ENCODE measurements at regions of chr12 and their contacts with region 1.

Region 1: GRCh38 chr12:69290545-69291277 is 51.3 kb downstream of the CPSF6 start:
- H3K4me3 Mint-ChIP-seq: no peak overlapping the region
- H3K27ac Mint-ChIP-seq: peak overlapping the region; percentile 13
- H3K4me1 Mint-ChIP-seq: peaks cover 30% of the 10 kb centered on the region
- H3K27me3 Mint-ChIP-seq: peaks cover 17% of the 10 kb centered on the region

Region 2: DNA sequence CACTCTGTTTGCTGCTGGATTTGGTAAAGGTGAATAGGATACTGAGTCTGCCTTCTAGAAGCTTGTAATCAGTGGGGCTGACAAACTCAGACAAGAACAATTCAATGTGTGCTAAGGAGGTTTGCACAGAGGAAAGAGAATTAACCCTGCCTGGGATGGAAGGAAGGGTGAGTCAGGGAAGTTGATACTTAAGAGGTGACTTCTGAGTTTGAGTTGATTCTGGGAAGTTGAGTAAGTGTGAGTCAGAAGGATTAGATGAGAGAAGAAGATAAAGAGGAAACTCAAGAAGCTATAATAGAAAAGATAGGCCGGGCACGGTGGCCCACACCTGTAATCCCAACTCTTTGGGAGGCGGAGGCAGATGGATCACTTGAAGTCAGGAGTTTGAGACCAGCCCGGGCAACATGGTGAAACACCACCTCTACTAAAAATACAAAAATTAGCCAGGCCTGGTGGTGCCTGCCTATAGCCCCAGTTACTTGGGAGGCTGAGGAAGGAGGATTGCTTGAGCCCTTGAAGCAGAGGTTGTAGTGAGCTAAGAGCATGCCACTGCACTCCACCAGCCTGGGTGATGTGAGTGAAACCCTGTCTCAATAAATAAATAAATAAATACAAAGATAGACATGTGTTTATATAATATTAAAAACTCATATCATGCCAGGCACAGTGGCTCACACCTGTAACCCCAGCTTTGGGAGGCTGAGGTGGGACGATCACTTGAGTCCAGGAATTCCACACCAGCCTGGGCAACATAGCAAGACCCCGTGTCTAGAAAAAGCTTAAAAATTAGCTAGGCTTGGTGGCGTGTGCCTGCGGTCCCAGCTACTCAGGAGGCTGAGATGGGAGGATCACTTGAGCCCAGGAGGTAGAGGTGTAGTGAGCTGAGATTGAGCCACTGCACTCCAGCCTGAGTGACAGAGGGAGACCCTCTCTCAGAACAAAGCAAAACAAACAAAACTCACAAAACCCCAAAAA is 230.9 kb before region 1 on chr12:
- intact Hi-C with region 1: no loop called
- H3K4me3 Mint-ChIP-seq: no peak overlapping the region
- H3K27ac Mint-ChIP-seq: no peak overlapping the region
- H3K4me1 Mint-ChIP-seq: peaks cover 51% of the 10 kb centered on the region
- H3K27me3 Mint-ChIP-seq: no peaks in the 10 kb centered on the region

Region 3: DNA sequence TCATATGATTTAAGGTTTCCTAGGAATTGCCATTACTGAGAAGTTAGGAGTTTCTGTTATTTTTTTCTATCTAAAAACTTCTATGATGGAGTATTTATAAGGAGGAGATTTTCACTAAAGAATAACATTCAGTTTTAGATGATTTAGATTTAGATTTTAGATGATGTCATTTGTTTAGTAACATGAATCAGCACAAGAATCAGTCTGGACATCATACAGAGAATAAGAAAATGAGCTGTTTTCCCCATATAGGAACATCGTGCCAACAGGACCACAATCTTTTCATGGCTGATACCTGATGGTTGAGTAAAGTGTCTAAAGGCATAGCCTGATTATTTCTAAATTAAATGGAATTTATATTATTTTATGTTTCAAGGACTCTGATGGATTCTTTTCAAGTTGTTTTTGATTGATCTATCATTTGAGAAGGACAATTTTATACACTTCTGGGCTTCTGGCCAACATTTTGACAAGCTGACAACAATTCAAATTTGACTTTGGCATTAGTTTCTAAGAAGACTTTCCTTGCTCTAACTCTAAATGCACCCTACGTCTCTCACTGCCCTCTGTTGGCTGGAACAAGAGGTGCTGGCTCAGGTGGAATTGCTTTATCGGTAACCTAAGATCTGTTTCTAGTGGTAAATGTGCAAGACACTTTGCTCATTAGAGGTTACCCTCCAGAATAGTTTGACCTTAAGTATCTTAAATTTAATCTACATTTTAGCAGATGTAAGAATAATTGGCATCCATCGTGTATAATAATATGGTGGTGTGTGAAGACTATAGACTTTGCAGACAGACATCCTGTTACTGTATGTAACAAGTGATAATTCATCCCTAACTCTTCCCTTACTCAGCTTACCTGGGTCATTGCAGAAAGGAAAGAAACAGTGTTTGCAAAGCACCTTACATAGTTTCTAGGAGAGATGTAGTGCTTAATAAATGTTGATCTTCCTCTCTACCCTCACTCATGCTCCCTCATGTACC is 94.1 kb before region 1 on chr12:
- intact Hi-C with region 1: no loop called
- H3K4me3 Mint-ChIP-seq: no peak overlapping the region
- H3K27ac Mint-ChIP-seq: no peak overlapping the region
- H3K4me1 Mint-ChIP-seq: no peaks in the 10 kb centered on the region
- H3K27me3 Mint-ChIP-seq: no peaks in the 10 kb centered on the region

Region 4: DNA sequence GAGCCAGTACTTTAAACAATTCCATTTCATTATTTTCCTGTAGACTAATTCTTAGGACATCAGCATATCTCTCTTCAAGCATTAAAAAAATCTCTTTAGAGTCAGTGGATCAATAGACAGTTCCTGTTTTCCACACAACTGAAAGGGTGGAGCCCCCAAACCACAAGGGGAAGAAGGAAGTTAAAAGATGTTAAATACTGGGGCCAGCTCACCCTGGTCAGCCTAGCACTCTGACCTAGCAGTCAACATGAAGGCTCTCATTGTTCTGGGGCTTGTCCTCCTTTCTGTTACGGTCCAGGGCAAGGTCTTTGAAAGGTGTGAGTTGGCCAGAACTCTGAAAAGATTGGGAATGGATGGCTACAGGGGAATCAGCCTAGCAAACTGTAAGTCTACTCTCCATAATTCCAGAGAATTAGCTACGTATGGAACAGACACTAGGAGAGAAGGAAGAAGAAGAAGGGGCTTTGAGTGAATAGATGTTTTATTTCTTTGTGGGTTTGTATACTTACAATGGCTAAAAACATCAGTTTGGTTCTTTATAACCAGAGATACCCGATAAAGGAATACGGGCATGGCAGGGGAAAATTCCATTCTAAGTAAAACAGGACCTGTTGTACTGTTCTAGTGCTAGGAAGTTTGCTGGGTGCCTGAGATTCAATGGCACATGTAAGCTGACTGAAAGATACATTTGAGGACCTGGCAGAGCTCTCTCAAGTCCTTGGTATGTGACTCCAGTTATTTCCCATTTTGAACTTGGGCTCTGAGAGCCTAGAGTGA is 57.6 kb after region 1 on chr12 and contains the start of gene LYZ:
- intact Hi-C with region 1: loop called (anchors 2 kb)
- H3K4me3 Mint-ChIP-seq: peak within 1 kb of the TSS; percentile 91
- H3K27ac Mint-ChIP-seq: peak within 1 kb of the TSS; percentile 91
- H3K4me1 Mint-ChIP-seq: peaks cover 27% of the 10 kb centered on the region
- H3K27me3 Mint-ChIP-seq: no peaks in the 10 kb centered on the region

Region 5: DNA sequence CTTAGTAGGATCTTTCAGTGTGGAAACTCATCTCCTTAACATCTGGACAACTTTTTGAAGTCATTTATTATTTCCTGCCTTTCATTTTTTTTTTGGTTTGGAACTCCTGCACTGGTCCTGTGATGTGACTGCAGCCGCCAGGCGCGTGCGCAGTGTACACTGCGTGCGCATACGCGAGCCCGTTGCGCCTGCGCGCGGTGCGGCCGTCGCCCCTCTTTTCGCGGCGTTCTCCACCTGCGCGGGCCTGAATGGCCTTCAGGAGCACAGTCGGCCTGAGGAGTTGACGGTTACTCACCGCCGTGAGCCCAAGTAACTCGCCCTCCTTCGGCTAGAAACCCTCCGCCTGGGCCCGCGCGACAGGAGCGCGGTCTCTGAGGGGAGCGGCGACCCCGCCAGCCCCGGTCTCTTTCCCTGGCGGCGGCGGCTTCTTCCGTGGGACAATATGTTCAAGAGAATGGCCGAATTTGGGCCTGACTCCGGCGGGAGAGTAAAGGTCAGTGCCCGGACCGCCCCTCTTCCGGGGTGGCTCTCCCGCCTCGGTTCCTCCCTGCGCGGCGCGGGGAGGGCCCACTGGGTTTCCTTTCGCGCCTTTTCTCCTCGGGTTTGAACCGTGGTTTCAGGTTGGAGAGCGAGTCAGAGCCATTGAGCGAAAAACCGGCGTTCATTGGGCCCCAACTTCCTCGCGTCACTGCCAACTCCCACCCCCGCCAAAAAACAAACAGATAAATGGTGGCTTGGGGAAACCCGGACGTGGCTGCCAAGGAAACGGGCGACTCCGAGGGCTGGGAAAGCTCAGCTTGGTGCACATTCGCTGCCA is 69.0 kb after region 1 on chr12 and contains the start of gene YEATS4:
- intact Hi-C with region 1: loop called (anchors 2 kb)
- H3K4me3 Mint-ChIP-seq: peak within 1 kb of the TSS; percentile 78
- H3K27ac Mint-ChIP-seq: peak within 1 kb of the TSS; percentile 87
- H3K4me1 Mint-ChIP-seq: peaks cover 27% of the 10 kb centered on the region
- H3K27me3 Mint-ChIP-seq: no peaks in the 10 kb centered on the region

Region 6: GRCh38 chr12:69519871-69520270 is 229.2 kb after region 1 on chr12:
- intact Hi-C with region 1: no loop called
- H3K4me3 Mint-ChIP-seq: no peak overlapping the region
- H3K27ac Mint-ChIP-seq: no peak overlapping the region
- H3K4me1 Mint-ChIP-seq: peaks cover 18% of the 10 kb centered on the region
- H3K27me3 Mint-ChIP-seq: no peaks in the 10 kb centered on the region

Region 7: DNA sequence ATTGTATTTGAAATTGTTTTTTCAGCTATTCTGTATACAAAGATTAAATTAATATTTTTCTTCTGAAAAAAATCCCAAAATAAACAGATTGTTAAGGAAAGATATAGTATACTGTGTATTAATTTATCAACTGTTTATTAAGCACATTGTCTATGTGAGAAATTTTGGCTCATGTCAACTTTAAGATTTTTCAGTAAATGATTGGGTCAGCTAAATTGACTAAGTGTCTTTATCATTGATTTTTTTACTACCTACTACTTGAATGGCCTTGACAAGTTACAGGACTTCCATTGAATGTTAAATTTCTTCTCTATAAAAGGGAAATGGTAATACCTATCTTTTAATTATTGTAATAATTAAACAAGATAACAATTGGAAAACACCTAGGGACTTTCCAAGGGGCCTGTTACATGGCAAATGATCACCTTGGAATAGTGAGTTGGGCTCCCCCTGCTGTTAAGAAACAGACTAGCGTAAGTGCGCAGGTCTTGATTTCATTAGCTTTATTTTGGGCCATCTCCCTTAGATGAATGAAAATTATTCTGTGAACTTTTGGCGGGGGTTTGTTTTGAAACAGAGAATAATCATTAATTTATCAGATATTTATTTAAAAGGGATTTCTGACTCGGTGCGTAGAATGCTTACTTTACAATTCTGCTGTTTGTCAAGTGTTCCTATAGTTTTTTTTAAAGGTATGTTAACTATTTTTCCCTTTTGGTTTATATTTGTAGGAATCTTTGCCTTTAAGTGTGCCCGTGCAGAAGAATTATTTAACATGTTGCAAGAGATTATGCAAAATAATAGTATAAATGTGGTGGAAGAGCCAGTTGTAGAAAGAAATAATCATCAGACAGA is 280.1 kb after region 1 on chr12:
- intact Hi-C with region 1: loop called (anchors 1 kb)
- H3K4me3 Mint-ChIP-seq: no peak overlapping the region
- H3K27ac Mint-ChIP-seq: no peak overlapping the region
- H3K4me1 Mint-ChIP-seq: no peaks in the 10 kb centered on the region
- H3K27me3 Mint-ChIP-seq: no peaks in the 10 kb centered on the region

Region 8: DNA sequence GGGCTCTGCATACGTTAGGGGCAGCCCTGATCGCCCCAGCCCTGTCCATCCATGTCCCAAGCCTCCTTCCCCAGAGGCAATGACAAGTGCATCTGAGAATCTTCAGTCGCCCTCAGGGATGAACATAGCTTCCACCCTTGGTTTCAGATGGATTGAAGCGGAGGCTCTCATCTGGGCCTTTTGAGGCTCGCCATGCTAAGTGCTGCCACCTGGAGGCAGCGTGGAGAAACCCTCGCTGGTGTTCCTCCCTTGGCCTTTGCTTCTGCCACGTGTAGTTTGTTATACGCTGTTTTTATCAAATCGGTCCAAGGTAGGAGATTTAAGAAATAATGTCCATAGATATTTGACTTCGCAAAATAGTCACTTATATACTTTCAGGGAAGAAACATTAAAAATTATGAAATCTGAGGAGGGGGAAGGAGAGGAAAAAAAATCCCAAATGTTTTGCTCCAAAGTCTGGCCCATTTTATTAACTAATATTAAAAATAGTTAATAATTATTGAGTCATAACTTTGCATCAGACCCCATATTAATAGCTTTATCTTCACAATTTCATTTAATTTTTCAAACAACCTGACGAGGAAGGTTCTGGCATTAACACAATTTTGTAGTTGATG is 348.8 kb after region 1 on chr12:
- intact Hi-C with region 1: loop called (anchors 2 kb)
- H3K4me3 Mint-ChIP-seq: no peak overlapping the region
- H3K27ac Mint-ChIP-seq: no peak overlapping the region
- H3K4me1 Mint-ChIP-seq: no peaks in the 10 kb centered on the region
- H3K27me3 Mint-ChIP-seq: no peaks in the 10 kb centered on the region

Region 9: DNA sequence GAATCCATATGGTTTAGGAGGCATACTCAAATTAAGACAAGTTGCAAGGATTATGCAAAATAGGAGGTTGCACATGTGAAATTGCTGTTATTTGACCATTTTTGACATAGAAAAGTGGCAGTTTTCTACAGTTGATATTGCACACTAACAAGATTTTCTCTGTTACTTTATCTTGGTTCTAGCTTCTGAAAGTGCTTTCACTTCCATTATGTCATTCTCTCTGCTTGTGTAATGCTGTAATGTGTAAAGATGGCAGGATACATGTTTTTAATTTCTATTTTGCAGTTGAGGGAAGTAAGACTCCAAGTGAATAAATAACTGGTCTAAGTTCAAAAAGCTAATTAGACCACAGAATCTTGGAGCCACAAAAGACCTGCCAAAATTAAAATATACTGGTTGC is 594.9 kb after region 1 on chr12:
- intact Hi-C with region 1: no loop called
- H3K4me3 Mint-ChIP-seq: no peak overlapping the region
- H3K27ac Mint-ChIP-seq: no peak overlapping the region
- H3K4me1 Mint-ChIP-seq: no peaks in the 10 kb centered on the region
- H3K27me3 Mint-ChIP-seq: no peaks in the 10 kb centered on the region